Right ventricle myocardium inferior (tissue), 1 donor: ENCODE measurements at regions of chr15 and their contacts with region 1.

Region 1: GRCh38 chr15:40367686-40368611 is 9.9 kb downstream of the DISP2 start:
- DNase-seq: peak; percentile 94
- ATAC-seq: peak; percentile 67

Region 2: GRCh38 chr15:40217159-40217824 is 150.7 kb before region 1 on chr15:
- intact Hi-C with region 1: no loop called
- DNase-seq: no peak
- ATAC-seq: peak; percentile 80

Region 3: DNA sequence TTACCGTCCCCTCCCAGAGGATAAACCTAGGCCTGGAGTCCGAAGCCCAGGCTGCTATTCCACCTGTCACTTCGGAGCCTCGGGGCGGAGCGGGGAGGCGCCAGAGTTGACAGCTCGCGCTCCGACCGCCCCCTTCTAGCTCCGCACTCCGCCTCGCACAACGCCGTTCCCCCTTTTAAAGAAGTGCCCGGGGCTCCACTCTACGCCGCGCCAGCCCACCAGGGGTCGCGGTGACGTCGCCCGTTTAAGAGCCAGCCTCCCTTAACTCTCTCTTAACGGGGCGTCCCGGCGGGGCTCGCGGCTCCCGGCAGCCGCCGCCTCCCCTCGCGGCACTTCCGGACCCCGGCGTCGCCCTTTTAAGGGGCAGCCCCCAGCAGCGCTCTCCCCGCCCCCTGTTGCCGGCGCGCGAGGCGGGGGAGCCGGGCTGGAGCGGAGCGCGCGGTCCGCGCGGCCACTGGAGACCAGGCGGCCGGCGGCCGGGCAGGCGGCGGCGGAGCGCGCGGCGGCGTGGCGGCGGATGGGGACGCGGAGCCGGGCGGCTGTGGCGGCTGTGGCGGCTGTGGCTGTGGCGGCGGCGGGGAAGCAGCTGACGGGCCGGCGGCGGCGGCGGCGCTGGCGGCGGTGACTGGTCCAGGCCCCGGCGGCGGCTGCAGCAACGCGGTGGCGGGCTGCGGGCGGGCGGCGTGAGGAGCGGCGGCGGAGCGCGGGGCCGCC is 44.6 kb before region 1 on chr15 and contains the start of gene INAFM2:
- intact Hi-C with region 1: loop called (anchors 1 kb)
- DNase-seq: peak; percentile 94
- ATAC-seq: peak; percentile 91
- total RNA-seq, gene INAFM2: 55.6 TPM

Region 4: GRCh38 chr15:40338041-40338657 is 29.8 kb before region 1 on chr15:
- intact Hi-C with region 1: loop called (anchors 2 kb)
- DNase-seq: peak; percentile 89
- ATAC-seq: no peak

Region 5: GRCh38 chr15:40354408-40355171 is 13.4 kb before region 1 on chr15:
- intact Hi-C with region 1: no loop called
- DNase-seq: no peak
- ATAC-seq: no peak

Region 6: GRCh38 chr15:40405501-40406381 is 37.8 kb after region 1 on chr15 and contains the start of gene IVD:
- intact Hi-C with region 1: loop called (anchors 5 kb)
- DNase-seq: peak; percentile 97
- ATAC-seq: peak; percentile 99
- total RNA-seq, gene IVD: 88.6 TPM

Region 7: DNA sequence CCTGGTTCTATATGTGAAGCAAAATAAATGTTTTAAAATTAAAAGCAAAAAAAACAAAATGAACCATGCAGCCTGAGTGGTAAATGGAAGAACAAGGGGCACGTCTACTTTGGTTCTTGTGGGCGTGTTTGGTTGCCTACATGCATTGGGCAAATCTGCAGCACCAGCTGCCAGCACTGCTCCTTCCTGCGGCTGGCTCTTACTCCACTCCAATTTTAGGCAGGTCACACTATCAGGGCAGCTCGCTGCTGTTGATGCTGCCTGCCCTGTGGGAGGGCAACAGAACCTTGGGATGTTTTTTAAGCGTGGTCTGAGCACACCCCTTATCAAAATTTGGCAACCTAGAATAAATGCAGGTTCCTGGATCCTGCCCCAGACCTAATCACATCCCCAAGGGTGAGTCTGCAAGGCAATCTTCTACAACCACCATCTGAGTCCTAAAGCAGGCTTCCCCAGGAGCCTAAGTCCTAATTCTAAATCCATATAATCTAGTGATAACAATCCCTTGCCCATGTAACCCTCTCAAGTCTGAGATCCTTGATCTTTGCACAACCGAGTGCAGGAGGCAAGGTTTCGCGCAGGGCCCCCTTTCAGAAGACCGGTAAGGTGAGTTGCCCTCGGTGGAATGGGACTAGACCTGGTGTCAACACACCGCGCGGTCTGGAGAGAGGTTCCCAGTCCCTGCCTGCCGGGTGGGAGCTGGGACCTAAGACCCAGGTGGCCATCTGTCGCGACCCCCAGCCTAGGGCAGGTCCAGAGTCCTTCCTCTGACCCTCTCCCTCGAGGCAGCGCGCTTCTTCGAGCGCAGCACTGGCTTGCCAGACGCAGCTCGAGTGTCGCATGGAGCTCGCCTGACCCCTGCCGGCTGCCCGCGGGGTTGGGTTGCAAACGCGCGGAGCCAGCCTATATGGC is 53.6 kb after region 1 on chr15:
- intact Hi-C with region 1: loop called (anchors 2 kb)
- DNase-seq: peak; percentile 93
- ATAC-seq: peak; percentile 92

Region 8: DNA sequence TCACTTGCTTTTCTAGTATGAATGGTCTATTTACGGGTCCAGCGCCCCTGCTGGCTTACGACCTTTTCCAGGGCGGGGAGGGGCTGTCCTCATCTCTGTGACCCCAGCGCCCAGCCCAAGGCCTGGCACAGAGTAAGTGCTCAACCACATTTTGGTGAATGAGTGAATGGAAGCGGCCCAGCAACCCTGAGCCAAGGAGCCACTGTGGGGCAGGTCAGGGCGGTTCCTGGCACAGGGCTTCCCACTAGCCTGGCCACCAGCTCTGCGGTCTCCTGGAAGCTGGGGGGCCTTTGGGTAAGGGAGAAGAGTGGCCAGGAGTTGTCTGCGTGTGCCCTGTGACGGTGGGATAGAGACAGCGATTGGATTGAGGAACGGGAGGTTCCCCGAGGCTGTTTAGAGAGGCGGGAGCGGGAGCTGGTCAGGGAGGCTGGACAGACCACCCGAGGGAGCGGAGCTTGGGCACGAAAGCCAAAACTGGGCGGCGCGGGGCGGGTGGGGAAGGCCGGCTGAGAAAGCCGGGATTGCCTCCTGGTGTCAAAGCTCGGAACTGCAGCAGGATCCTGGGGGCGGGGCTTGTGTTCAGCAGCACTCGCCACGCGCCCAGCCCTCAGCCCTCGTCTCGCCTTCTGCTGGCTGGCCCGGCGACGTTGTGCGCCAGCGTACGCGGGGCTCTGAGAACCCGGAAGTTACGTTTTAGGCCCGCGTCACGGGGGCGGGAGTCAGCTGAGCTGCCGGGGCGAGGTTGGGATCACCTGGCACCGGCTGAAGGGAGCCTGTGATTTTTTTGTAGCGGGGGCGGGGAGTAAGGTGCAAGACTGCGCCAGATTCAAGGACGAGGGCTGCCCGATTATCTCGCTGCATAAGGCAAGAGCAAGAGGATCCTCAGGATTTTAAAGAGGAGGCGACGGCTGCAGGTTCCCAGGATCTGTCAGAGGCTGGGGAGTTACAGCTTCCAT is 526.1 kb after region 1 on chr15 and contains the start of gene VPS18:
- intact Hi-C with region 1: no loop called
- DNase-seq: peak; percentile 99
- ATAC-seq: peak; percentile 98
- total RNA-seq, gene VPS18: 20.6 TPM